ENCODE measurements at regions of chrX and their contacts with region 1.

Region 1: GRCh38 chrX:38817004-38817703 is 15.9 kb downstream of the MID1IP1 start:
- DNase-seq: peak; percentile 29
- ATAC-seq: no peak
- H3K4me3 Mint-ChIP-seq: no peak overlapping the region
- H3K27ac Mint-ChIP-seq: no peak overlapping the region
- H3K4me1 Mint-ChIP-seq: peaks cover 18% of the 10 kb centered on the region
- H3K27me3 Mint-ChIP-seq: no peaks in the 10 kb centered on the region

Region 2: GRCh38 chrX:38803586-38804431 is 13.3 kb before region 1 on chrX:
- CTCF ChIA-PET with region 1: interaction called, 12 read pairs
- POLR2A ChIA-PET with region 1: interaction called, 26 read pairs
- DNase-seq: peak; percentile 82
- ATAC-seq: peak; percentile 71
- H3K4me3 Mint-ChIP-seq: peak overlapping the region; percentile 94
- H3K27ac Mint-ChIP-seq: peak overlapping the region; percentile 97
- H3K4me1 Mint-ChIP-seq: peaks cover 20% of the 10 kb centered on the region
- H3K27me3 Mint-ChIP-seq: no peaks in the 10 kb centered on the region

Measured in activated CD8-positive, alpha-beta T cell treated with anti-CD3 and anti-CD28 coated beads, Interleukin-2, amount 10 ng/mL, durations not matched to agents 7 days and 5 days (primary cell).